ENCODE measurements at regions of chr12 and their contacts with region 1.

Region 1: GRCh38 chr12:60172266-60172665 is 576.4 kb downstream of the SLC16A7 start:
- DNase-seq: no peak
- H3K4me3 ChIP-seq: no peak overlapping the region
- H3K27ac ChIP-seq: no peak overlapping the region
- H3K4me1 ChIP-seq: no peaks in the 10 kb centered on the region
- H3K27me3 ChIP-seq: no peaks in the 10 kb centered on the region
- CTCF ChIP-seq: no peak
- EP300 ChIP-seq: no peak
- POLR2A ChIP-seq: no peak

Region 2: GRCh38 chr12:60072911-60073310 is 99.4 kb before region 1 on chr12:
- intact Hi-C with region 1: no loop called
- DNase-seq: no peak
- H3K4me3 ChIP-seq: no peak overlapping the region
- H3K27ac ChIP-seq: no peak overlapping the region
- H3K4me1 ChIP-seq: no peaks in the 10 kb centered on the region
- H3K27me3 ChIP-seq: no peaks in the 10 kb centered on the region
- CTCF ChIP-seq: no peak
- EP300 ChIP-seq: no peak
- POLR2A ChIP-seq: no peak

Region 3: GRCh38 chr12:60191676-60192359 is 19.6 kb after region 1 on chr12:
- intact Hi-C with region 1: loop called in 1 of 4 experiments (anchors 1 kb)
- DNase-seq: no peak
- H3K4me3 ChIP-seq: no peak overlapping the region
- H3K27ac ChIP-seq: no peak overlapping the region
- H3K4me1 ChIP-seq: no peaks in the 10 kb centered on the region
- H3K27me3 ChIP-seq: peaks cover 2% of the 10 kb centered on the region
- CTCF ChIP-seq: no peak
- EP300 ChIP-seq: no peak
- POLR2A ChIP-seq: no peak